ENCODE measurements at regions of chr1 and their contacts with region 1.

Region 1: DNA sequence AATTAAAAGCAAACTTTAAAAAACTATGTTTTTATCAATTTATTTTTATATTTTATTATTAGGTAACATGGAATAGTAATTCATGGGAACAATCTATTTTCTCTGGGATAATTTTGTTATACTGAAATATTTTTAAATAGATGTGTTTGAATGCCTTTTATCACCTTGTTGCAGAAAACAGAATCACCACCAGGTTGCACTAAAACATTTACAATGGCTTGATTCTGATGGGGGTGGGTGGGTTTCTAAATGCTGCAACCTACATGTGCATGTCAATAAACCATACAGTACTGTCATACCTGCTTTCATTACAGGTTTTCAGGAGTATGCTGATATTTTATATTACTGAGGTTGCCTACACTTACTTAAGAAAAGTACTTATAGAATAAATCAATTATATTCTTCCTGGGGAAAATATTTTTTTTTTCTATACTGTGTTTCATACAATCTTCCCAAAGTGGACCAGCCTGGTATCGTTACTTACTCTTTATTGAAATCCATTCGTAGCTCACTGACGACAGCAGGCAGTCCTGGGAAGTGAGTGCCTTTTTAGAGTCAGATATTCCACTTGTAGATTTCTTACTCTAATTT is 132.8 kb downstream of the PTPRC start:
- DNase-seq: peak; percentile 27
- H3K4me3 ChIP-seq: no peak overlapping the region
- H3K27ac ChIP-seq: no peak overlapping the region
- H3K27me3 ChIP-seq: no peaks in the 10 kb centered on the region
- CTCF ChIP-seq: peak; percentile 63

Region 2: GRCh38 chr1:198699167-198700015 is 72.3 kb before region 1 on chr1:
- CTCF ChIA-PET with region 1: no interaction called
- POLR2A ChIA-PET with region 1: no interaction called
- DNase-seq: no peak
- H3K4me3 ChIP-seq: no peak overlapping the region
- H3K27ac ChIP-seq: no peak overlapping the region
- H3K27me3 ChIP-seq: no peaks in the 10 kb centered on the region
- CTCF ChIP-seq: peak; percentile 85

Region 3: DNA sequence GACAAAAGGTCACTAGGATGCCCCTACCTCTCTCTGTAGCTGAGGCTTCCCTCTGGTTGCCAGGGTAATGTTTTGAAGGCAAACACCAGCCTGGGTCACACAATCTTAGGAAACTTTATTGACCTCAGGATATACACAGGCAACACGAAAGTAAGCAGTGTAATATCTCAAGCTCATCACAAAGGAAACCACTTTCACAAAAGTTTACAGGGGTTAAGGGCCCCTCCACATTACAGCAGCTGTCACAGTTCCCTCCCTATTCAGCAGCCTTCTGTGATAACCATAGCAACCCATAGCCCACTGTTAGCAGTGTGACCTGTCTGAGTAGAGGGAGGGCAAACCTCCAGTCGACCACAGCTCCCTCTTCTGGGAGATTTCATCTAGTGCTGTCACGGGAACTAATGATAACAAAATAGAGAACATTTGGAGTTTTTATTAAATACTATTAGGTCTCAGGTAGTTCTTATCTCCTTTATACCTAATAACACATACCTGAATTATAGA is 17.0 kb after region 1 on chr1:
- CTCF ChIA-PET with region 1: interaction called, 4 read pairs
- POLR2A ChIA-PET with region 1: interaction called, 14 read pairs
- DNase-seq: no peak
- H3K4me3 ChIP-seq: no peak overlapping the region
- H3K27ac ChIP-seq: no peak overlapping the region
- H3K27me3 ChIP-seq: no peaks in the 10 kb centered on the region
- CTCF ChIP-seq: peak; percentile 24; the same call in 1 of the 2 replicates

Region 4: GRCh38 chr1:198798923-198799386 is 27.3 kb after region 1 on chr1:
- CTCF ChIA-PET with region 1: no interaction called
- POLR2A ChIA-PET with region 1: no interaction called
- DNase-seq: no peak
- H3K4me3 ChIP-seq: no peak overlapping the region
- H3K27ac ChIP-seq: no peak overlapping the region
- H3K27me3 ChIP-seq: no peaks in the 10 kb centered on the region
- CTCF ChIP-seq: no peak

Measured in AG04450 (cell line).